GM18951 (cell line): ENCODE measurements at regions of chr12 and their contacts with region 1.

Region 1: DNA sequence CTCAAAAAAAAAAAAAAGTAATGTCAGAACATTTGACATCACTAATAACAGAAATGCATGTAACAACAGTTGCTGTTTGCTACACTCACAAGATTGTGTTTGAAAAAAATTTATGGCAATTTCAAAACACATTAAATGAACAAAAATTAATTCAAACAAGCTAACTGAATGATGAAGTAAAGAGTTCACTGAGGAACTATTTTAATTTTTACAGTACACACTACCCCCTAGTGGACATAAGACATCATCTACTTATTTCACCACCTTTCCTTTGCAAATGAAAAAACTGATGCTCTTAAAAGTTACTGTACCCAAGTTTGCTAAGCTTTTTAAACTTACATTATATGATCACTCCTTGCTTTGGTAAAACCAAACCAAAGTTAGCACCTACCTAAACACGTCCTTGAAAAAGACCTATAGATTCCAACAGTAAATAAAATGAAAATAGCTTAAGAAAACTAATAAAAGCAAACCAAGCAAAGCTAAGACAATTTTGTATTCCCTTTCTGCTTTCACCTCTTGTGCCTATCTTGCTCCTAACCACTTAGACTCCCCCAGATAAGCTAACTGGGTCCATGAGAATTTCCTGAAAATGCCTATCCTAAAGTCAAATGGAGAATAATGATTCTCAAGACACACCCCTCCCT is 22.2 kb downstream of the UBE2N start:
- POLR2A ChIP-seq: no peak

Region 2: GRCh38 chr12:92987362-92987761 is 432.1 kb before region 1 on chr12:
- in situ Hi-C with region 1: loop called (anchors 10 kb)
- POLR2A ChIP-seq: no peak